Sigmoid colon (tissue), 7 donors: ENCODE measurements at regions of chr17 and their contacts with region 1.

Region 1: GRCh38 chr17:80101011-80101945 is at the start of gene GAA:
- DNase-seq: peak; percentile 93
- H3K4me3 ChIP-seq: peak within 1 kb of the TSS; percentile 73 to 93 (median 90)
- H3K27ac ChIP-seq: peak within 1 kb of the TSS; percentile 91 to 97 (median 96)
- H3K4me1 ChIP-seq: peaks cover 0 to 19% (median 16%) of the 10 kb centered on the region in 4 donors
- H3K27me3 ChIP-seq: no peaks in the 10 kb centered on the region
- CTCF ChIP-seq: peak in 3 of 4 experiments; percentile 37 to 87 (median 47)
- EP300 ChIP-seq: peak in 1 of 4 donors; percentile 18
- POLR2A ChIP-seq: no peak
- total RNA-seq, gene GAA: 38.5 to 74.2 (median 54.4) TPM

Region 2: DNA sequence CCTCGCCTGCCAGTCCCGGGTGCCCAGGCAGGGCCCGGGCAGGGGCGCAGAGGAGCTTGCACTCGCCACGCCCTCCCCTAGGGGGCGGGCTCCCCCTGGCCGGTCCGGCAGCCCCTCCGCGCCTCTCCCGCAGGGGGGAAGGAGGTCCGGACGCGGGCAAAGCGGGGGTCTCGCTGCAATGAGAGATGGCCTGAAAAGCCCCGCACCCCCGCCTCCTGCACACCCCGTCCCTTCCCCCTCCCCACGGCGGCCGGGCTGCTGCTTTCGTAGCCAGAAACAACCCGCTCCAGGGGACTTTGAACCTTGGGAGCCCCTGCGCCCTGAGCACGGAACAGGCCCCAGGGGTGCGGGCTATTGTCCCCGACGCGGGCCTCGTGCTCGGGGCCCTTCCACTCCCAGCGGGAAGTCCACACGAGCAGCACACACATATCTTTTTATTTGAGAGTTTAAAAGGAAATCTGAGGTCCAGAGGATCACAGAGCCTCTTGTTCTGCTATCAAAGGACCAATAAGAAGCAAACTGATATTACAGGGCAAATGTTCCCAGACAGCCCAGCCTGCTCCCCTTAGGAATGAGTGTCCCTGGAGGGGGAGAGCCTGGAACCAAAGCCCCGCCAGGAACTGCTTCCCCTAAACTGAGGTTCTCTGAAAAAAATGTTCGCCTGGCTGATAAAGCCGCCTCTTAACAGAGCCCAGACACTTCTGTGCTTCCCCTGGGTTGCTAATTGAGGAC is 256.2 kb before region 1 on chr17:
- intact Hi-C with region 1: loop called (anchors 2 kb)
- DNase-seq: peak; percentile 75
- H3K4me3 ChIP-seq: peak overlapping the region; percentile 22 to 64 (median 54)
- H3K27ac ChIP-seq: peak overlapping the region; percentile 47 to 60 (median 57)
- H3K4me1 ChIP-seq: peaks cover 0 to 56% (median 52%) of the 10 kb centered on the region in 4 donors
- H3K27me3 ChIP-seq: peaks cover 35 to 56% (median 38%) of the 10 kb centered on the region in 3 donors
- CTCF ChIP-seq: peak in 3 of 4 experiments; percentile 29 to 86 (median 39)
- EP300 ChIP-seq: no peak
- POLR2A ChIP-seq: no peak

Region 3: DNA sequence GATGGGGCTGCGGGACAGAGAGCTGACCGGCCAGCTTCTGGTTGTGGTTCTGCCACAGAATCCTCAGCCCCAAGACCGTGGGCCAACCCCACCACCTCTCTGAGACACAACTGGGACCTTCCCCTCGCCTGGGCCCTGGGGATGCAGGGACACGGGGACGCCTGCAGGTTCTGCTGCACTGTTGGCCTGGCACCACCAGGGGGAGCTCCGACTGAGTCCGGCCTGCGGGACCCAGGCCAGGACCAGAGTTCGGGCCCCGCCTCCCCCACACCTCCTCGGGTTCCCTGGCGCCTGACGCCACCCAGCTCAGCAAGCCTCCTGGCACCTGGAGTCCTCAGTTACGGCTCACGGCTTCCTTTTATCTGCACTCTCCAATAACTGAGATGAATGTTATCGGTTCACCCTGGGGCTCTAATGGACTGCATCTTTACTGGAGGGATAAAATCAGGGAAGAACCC is 92.9 kb before region 1 on chr17:
- intact Hi-C with region 1: loop called (anchors 5 kb)
- DNase-seq: peak; percentile 90
- H3K4me3 ChIP-seq: no peak overlapping the region
- H3K27ac ChIP-seq: no peak overlapping the region
- H3K4me1 ChIP-seq: peaks cover 0 to 17% (median 12%) of the 10 kb centered on the region in 4 donors
- H3K27me3 ChIP-seq: no peaks in the 10 kb centered on the region
- CTCF ChIP-seq: peak; percentile 84 to 93 (median 90)
- EP300 ChIP-seq: no peak
- POLR2A ChIP-seq: no peak

Region 4: GRCh38 chr17:80035943-80036714 is 65.1 kb before region 1 on chr17 and contains the start of gene CCDC40:
- intact Hi-C with region 1: loop called (anchors 1 kb)
- DNase-seq: peak; percentile 93
- H3K4me3 ChIP-seq: peak within 1 kb of the TSS; percentile 66 to 87 (median 83)
- H3K27ac ChIP-seq: peak within 1 kb of the TSS; percentile 83 to 96 (median 94)
- H3K4me1 ChIP-seq: peaks cover 0 to 24% (median 10%) of the 10 kb centered on the region in 4 donors
- H3K27me3 ChIP-seq: no peaks in the 10 kb centered on the region
- CTCF ChIP-seq: no peak
- EP300 ChIP-seq: no peak
- POLR2A ChIP-seq: peak; percentile 8 to 31
- total RNA-seq, gene CCDC40: 5.3 to 25.8 (median 6.4) TPM

Region 5: GRCh38 chr17:80147035-80147836 is 46.0 kb after region 1 on chr17 and contains the start of gene EIF4A3:
- intact Hi-C with region 1: loop called (anchors 2 kb)
- DNase-seq: peak; percentile 99
- H3K4me3 ChIP-seq: peak within 1 kb of the TSS; percentile 79 to 98 (median 94)
- H3K27ac ChIP-seq: peak within 1 kb of the TSS; percentile 93 to 98 (median 96)
- H3K4me1 ChIP-seq: peaks cover 0 to 33% (median 29%) of the 10 kb centered on the region in 4 donors
- H3K27me3 ChIP-seq: no peaks in the 10 kb centered on the region
- CTCF ChIP-seq: no peak
- EP300 ChIP-seq: peak in 3 of 4 donors; percentile 75 to 99 (median 91)
- POLR2A ChIP-seq: peak; percentile 54 to 80
- total RNA-seq, gene EIF4A3: 26.6 to 45.1 (median 39.8) TPM

Region 6: GRCh38 chr17:80219763-80220725 is 118.8 kb after region 1 on chr17 and contains the starts of genes SGSH and SLC26A11:
- intact Hi-C with region 1: loop called (anchors 5 kb)
- DNase-seq: peak; percentile 93
- H3K4me3 ChIP-seq: peak within 1 kb of the TSS; percentile 83 to 100 (median 96)
- H3K27ac ChIP-seq: peak within 1 kb of the TSS; percentile 79 to 89 (median 88)
- H3K4me1 ChIP-seq: peaks cover 0 to 26% (median 21%) of the 10 kb centered on the region in 4 donors
- H3K27me3 ChIP-seq: no peaks in the 10 kb centered on the region
- CTCF ChIP-seq: no peak
- EP300 ChIP-seq: no peak
- POLR2A ChIP-seq: no peak
- total RNA-seq, gene SGSH: 11.4 to 31.6 (median 12.9) TPM
- total RNA-seq, gene SLC26A11: 6.8 to 14.5 (median 11.5) TPM

Region 7: GRCh38 chr17:80263253-80264204 is 162.3 kb after region 1 on chr17:
- intact Hi-C with region 1: loop called (anchors 5 kb)
- DNase-seq: peak; percentile 95
- H3K4me3 ChIP-seq: peak overlapping the region; percentile 18 to 42 (median 39)
- H3K27ac ChIP-seq: peak overlapping the region; percentile 94 to 100 (median 99)
- H3K4me1 ChIP-seq: peaks cover 0 to 41% (median 39%) of the 10 kb centered on the region in 4 donors
- H3K27me3 ChIP-seq: no peaks in the 10 kb centered on the region
- CTCF ChIP-seq: no peak
- EP300 ChIP-seq: no peak
- POLR2A ChIP-seq: no peak

Region 8: GRCh38 chr17:80274331-80274730 is 173.1 kb after region 1 on chr17:
- intact Hi-C with region 1: no loop called
- DNase-seq: no peak
- H3K4me3 ChIP-seq: no peak overlapping the region
- H3K27ac ChIP-seq: no peak overlapping the region
- H3K4me1 ChIP-seq: peaks cover 0 to 14% (median 5%) of the 10 kb centered on the region in 4 donors
- H3K27me3 ChIP-seq: no peaks in the 10 kb centered on the region
- CTCF ChIP-seq: no peak
- EP300 ChIP-seq: no peak
- POLR2A ChIP-seq: no peak